Lower leg skin (tissue), 4 donors: ENCODE measurements at regions of chr4 and their contacts with region 1.

Region 1: GRCh38 chr4:38190717-38191178 is 230.6 kb downstream of the PTTG2 start:
- DNase-seq: peak in 1 of 2 donors; percentile 61
- H3K4me3 ChIP-seq: no peak overlapping the region
- CTCF ChIP-seq: no peak
- POLR2A ChIP-seq: no peak

Region 2: DNA sequence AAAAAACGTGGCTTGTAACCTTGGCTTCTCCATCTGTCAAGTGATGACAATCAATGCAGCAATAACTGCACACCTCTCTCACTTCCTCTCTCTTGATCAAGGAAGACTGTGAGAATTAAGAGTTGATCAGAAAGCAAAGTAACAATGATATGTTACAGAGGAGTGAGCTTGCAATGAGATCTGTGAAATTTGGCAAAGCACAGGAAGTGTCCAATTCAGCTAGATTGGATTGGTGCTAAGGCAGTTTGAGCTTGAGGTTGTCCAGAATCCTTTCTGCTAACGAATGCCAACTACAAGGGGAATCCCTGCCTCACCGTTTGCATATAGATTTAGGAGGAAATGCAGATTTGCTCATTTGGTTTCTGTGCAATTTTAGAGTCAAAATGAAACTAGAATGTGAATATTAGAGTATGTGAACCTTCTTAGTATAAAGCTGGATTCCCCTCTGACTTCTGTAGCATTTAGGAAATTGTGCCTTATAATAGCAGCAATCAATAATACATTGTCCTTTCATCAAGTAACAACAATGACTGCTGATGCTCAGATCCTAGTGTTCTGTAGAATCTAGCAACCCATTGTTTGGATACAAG is 115.8 kb after region 1 on chr4:
- intact Hi-C with region 1: loop called (anchors 10 kb)
- DNase-seq: no peak
- H3K4me3 ChIP-seq: no peak overlapping the region
- CTCF ChIP-seq: no peak
- POLR2A ChIP-seq: no peak